AG04449 (cell line): ENCODE measurements at regions of chr7 and their contacts with region 1.

Region 1: GRCh38 chr7:5704534-5704922 is 76.9 kb downstream of the RNF216 start:
- DNase-seq: no peak
- H3K4me3 ChIP-seq: no peak overlapping the region
- CTCF ChIP-seq: peak; percentile 78

Region 2: DNA sequence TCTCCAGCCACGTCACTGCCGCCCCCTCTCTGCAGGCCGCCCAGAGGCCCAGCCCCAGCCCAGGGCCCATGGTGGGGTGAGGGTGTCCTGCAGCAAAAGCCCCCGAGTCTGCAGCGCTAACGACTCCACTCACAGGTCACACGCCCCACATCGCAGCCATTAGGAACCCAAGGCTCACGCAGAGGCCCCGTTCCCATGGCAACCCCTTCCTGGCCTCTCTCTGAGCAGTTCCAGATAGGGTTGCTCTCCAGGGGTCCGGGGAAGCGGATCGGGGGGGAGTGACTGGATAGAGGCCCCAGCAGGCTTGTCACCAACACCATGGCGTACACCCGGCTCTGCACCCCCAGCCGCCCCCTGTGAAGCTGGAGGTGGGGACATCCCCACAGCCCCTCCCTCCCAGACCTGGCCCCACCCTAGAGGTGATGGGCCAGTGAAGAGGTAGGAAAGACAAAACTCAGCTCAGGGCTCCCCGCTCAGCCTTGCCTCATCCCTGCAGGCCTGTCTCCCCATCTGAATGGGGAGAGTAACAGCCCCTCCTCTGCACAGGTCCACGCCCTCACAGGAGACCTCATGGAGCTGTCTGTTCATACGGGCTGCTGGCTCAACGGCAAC is 322.1 kb before region 1 on chr7:
- CTCF ChIA-PET with region 1: no interaction called
- POLR2A ChIA-PET with region 1: no interaction called
- DNase-seq: no peak
- H3K4me3 ChIP-seq: no peak overlapping the region
- CTCF ChIP-seq: no peak

Region 3: DNA sequence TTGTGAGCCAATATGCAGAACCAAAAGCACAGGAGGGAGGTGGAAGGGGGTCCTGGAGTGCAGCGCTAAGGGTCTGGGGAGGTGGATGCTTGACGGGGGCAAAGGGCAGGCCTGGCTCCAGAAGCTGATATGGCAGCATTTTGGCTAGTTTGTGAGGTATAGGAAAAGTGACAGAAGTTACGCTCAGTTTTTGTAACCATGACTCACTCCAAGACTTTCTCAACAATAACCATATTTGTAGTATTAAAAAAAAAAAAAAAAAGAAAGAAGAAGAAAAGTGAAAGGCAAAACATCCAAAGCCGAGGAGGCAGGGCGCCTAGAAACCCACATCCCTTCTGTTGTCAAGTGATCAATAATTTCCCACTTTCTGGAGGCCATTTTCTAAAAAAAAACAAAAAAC is 15.4 kb before region 1 on chr7:
- CTCF ChIA-PET with region 1: interaction called, 41 read pairs
- POLR2A ChIA-PET with region 1: interaction called, 4 read pairs
- DNase-seq: no peak
- H3K4me3 ChIP-seq: no peak overlapping the region
- CTCF ChIP-seq: no peak